Activated CD8-positive, alpha-beta T cell treated with anti-CD3 and anti-CD28 coated beads, Interleukin-2, amount 10 ng/mL, durations not matched to agents 7 days and 5 days (primary cell): ENCODE measurements at regions of chr20 and their contacts with region 1.

Region 1: GRCh38 chr20:53660078-53660909 is 66.7 kb upstream of the ZNF217 start:
- DNase-seq: peak; percentile 70
- ATAC-seq: peak; percentile 54
- H3K4me3 Mint-ChIP-seq: peak overlapping the region; percentile 86
- H3K27ac Mint-ChIP-seq: peak overlapping the region; percentile 93
- H3K4me1 Mint-ChIP-seq: peaks cover 70% of the 10 kb centered on the region
- H3K27me3 Mint-ChIP-seq: no peaks in the 10 kb centered on the region

Region 2: DNA sequence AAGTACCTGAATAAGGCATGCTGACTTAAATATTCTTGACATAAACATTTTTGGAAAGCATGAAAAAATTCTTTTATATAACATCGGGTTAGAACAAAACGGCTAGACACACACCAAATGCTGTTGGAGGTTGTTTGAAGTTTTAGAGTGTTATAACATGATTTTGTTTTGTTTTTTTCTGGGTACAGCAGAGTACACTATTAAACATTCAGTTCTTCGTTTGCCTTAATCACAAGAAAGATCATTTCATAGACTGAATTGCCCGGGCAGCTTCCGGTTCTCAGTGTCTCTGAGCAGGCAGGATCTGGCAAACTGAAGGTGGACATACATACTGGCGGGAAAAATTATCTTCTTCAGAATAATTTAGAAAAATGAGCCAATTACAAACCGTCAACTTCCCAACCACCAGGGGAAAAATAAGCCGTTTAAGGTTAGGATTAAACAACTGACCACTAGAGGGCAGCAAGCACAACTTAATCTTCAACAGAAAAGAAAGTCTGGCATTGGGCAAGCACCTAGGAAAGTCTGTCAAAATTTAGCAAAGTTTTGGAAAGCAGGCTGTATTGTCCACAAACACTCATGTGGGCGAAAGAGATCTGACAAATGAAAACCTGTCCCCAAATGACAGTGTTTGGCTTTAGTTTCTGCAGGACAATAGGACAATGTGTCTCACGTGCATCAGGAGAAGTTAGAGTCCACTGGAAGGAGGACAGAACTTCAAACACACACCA is 81.6 kb before region 1 on chr20:
- CTCF ChIA-PET with region 1: interaction called, 10 read pairs
- POLR2A ChIA-PET with region 1: interaction called, 3 read pairs
- DNase-seq: peak; percentile 84
- ATAC-seq: peak; percentile 35
- H3K4me3 Mint-ChIP-seq: peak overlapping the region; percentile 80
- H3K27ac Mint-ChIP-seq: peak overlapping the region; percentile 81
- H3K4me1 Mint-ChIP-seq: peaks cover 87% of the 10 kb centered on the region
- H3K27me3 Mint-ChIP-seq: no peaks in the 10 kb centered on the region

Region 3: GRCh38 chr20:53623454-53624211 is 36.7 kb before region 1 on chr20:
- CTCF ChIA-PET with region 1: interaction called, 10 read pairs
- POLR2A ChIA-PET with region 1: interaction called, 16 read pairs
- DNase-seq: peak; percentile 56
- ATAC-seq: peak; percentile 75
- H3K4me3 Mint-ChIP-seq: peak overlapping the region; percentile 72
- H3K27ac Mint-ChIP-seq: peak overlapping the region; percentile 97
- H3K4me1 Mint-ChIP-seq: peaks cover 56% of the 10 kb centered on the region
- H3K27me3 Mint-ChIP-seq: no peaks in the 10 kb centered on the region

Region 4: GRCh38 chr20:53643031-53643832 is 17.1 kb before region 1 on chr20:
- CTCF ChIA-PET with region 1: interaction called, 6 read pairs
- POLR2A ChIA-PET with region 1: interaction called, 11 read pairs
- DNase-seq: peak; percentile 83
- ATAC-seq: peak; percentile 94
- H3K4me3 Mint-ChIP-seq: peak overlapping the region; percentile 56
- H3K27ac Mint-ChIP-seq: peak overlapping the region; percentile 87
- H3K4me1 Mint-ChIP-seq: peaks cover 55% of the 10 kb centered on the region
- H3K27me3 Mint-ChIP-seq: no peaks in the 10 kb centered on the region

Region 5: DNA sequence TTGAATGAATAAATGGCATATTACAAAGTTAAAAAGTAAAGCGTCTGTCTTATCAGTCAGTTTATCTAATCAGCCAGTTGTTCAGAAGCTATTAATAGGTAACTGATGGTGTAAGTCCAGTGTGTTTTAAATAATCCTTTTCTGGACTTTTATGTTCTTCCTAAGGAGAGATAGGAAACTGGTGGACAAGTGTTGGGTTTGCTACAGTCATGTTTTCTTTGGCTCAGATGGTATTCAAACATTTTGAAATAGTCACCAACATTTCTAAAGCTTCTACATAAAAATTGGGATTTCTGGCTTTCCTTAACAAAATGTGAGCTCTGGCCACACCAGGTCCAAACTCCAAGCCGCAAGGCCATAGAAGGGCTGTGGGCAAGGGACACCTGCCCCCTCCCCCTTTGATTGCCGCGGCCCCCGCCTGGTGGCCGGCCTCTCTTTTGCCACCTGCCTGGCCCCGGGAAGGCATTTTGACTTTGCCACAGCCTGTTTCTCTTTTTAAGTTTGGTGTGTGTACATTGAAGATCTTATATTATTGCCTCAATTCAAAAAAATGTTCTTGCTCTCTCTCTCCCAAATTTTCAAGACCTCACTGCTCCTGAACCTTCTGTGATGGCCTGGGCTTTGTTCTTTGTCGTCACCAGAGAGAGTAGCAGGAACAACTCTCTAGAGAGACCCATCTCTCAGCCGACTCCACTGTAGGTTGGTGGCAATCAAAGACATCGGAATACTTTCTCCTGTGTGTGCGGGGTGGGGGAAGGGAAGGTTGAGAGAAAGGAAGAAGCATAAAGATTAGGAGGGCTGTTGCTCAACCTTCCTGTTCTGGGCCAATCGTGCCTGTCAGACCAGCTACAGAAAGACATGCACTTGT is 17.4 kb after region 1 on chr20:
- CTCF ChIA-PET with region 1: interaction called, 19 read pairs
- POLR2A ChIA-PET with region 1: interaction called, 6 read pairs
- DNase-seq: peak; percentile 60
- ATAC-seq: peak; percentile 72
- H3K4me3 Mint-ChIP-seq: peak overlapping the region; percentile 36
- H3K27ac Mint-ChIP-seq: peak overlapping the region; percentile 72
- H3K4me1 Mint-ChIP-seq: peaks cover 39% of the 10 kb centered on the region
- H3K27me3 Mint-ChIP-seq: no peaks in the 10 kb centered on the region